PC-9 (cell line): ENCODE measurements at regions of chr7 and their contacts with region 1.

Region 1: DNA sequence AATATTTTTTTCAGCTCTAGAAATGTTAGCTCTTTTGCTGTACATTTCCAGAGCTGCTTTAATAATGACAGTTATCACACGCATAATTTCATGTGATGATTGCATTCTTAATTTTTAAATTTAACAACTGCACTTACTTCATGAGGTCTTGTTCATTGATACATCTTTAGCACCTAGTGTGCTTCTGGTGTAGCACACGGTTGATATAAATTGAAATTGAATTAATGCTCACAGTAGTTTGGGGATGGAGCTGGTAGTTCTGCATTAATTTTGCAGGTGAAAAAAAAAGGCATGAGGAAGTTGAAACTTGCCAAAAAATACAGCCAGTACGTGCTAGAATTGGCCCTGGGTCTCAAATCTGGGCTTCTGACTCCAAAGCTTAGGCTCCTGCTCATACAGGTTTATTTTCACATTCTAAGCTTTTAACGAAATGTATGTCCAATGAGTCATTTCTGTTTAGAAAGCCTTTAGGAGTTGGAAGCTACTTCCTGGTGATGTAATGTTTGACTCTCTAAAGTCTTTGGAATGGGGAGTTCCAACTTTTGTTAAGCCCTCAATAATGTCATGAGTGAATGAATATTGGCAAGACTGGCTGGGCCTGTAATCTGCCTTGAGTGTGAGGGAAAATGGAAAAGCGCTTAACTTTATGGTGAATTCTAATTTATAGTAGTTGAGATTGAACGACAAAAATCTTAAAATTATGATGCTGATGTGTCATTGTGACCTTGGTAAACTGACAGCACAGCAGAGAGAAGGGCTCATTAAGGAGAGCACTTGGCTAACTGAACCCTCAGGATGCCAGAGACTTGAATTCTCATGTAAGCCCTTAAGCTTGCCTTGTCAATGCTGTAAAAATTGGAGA is 62.4 kb downstream of the DAGLB start:
- DNase-seq: peak; percentile 71 to 100
- H3K4me3 ChIP-seq: peak overlapping the region; percentile 17; the same call in 1 of the 2 replicates
- H3K27ac ChIP-seq: peak overlapping the region; percentile 90
- H3K4me1 ChIP-seq: peaks cover 92% of the 10 kb centered on the region
- H3K27me3 ChIP-seq: no peaks in the 10 kb centered on the region
- CTCF ChIP-seq: no peak

Region 2: GRCh38 chr7:6317797-6318438 is 67.4 kb before region 1 on chr7:
- CTCF ChIA-PET with region 1: no interaction called
- POLR2A ChIA-PET with region 1: interaction called, 15 read pairs
- intact Hi-C with region 1: no loop called
- DNase-seq: no peak
- H3K4me3 ChIP-seq: no peak overlapping the region
- H3K27ac ChIP-seq: no peak overlapping the region
- H3K4me1 ChIP-seq: no peaks in the 10 kb centered on the region
- H3K27me3 ChIP-seq: no peaks in the 10 kb centered on the region
- CTCF ChIP-seq: no peak

Region 3: DNA sequence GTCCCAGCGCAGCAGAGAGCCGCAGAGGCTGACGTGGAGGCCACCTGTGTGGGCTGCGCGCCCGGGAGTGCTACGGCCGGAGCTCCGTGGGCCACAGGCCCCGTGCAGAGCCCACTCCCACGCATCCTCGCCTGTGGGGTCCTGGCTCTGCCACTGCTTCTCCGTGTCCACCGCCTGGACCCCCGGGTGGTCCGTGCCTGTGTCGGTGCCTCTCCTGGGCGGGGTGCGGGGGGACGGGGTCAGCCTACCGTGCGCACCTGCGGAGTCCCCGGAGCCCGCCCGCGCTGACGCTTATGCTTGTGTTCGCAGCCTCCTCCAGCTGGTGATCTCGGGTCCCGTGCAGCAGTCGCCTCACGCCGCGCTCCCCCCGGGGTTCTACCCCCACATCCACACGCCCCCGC is 222.3 kb after region 1 on chr7:
- CTCF ChIA-PET with region 1: no interaction called
- POLR2A ChIA-PET with region 1: interaction called, 11 read pairs
- intact Hi-C with region 1: no loop called
- DNase-seq: no peak
- H3K4me3 ChIP-seq: no peak overlapping the region
- H3K27ac ChIP-seq: no peak overlapping the region
- H3K4me1 ChIP-seq: no peaks in the 10 kb centered on the region
- H3K27me3 ChIP-seq: no peaks in the 10 kb centered on the region
- CTCF ChIP-seq: no peak